HepG2 (cell line): ENCODE measurements at regions of chr5 and their contacts with region 1.

Region 1: GRCh38 chr5:134070725-134071613 is 43.5 kb upstream of the TCF7 start:
- DNase-seq: peak; percentile 72
- ATAC-seq: peak; percentile 88
- H3K4me3 ChIP-seq: peak overlapping the region; percentile 63 to 75 (median 68)
- H3K27ac ChIP-seq: peak overlapping the region; percentile 58
- H3K4me1 ChIP-seq: peaks cover 47% of the 10 kb centered on the region
- H3K27me3 ChIP-seq: no peaks in the 10 kb centered on the region
- CTCF ChIP-seq: peak; percentile 81
- EP300 ChIP-seq: peak in 1 of 2 experiments; percentile 84; a peak in 2 of 4 replicates
- POLR2A ChIP-seq: peak; percentile 13 to 24; a peak in 1 of 4 replicates
- RAD21 ChIP-seq: no peak; the same call in 1 of the 2 replicates

Region 2: GRCh38 chr5:134086943-134087305 is 16.0 kb after region 1 on chr5:
- CTCF ChIA-PET with region 1: no interaction called
- POLR2A ChIA-PET with region 1: interaction called, 11 read pairs
- in situ Hi-C with region 1: no loop called
- intact Hi-C with region 1: no loop called
- DNase-seq: no peak
- ATAC-seq: no peak
- H3K4me3 ChIP-seq: no peak overlapping the region
- H3K27ac ChIP-seq: no peak overlapping the region
- H3K4me1 ChIP-seq: peaks cover 75% of the 10 kb centered on the region
- H3K27me3 ChIP-seq: no peaks in the 10 kb centered on the region
- CTCF ChIP-seq: no peak
- EP300 ChIP-seq: no peak
- POLR2A ChIP-seq: no peak
- RAD21 ChIP-seq: no peak

Region 3: DNA sequence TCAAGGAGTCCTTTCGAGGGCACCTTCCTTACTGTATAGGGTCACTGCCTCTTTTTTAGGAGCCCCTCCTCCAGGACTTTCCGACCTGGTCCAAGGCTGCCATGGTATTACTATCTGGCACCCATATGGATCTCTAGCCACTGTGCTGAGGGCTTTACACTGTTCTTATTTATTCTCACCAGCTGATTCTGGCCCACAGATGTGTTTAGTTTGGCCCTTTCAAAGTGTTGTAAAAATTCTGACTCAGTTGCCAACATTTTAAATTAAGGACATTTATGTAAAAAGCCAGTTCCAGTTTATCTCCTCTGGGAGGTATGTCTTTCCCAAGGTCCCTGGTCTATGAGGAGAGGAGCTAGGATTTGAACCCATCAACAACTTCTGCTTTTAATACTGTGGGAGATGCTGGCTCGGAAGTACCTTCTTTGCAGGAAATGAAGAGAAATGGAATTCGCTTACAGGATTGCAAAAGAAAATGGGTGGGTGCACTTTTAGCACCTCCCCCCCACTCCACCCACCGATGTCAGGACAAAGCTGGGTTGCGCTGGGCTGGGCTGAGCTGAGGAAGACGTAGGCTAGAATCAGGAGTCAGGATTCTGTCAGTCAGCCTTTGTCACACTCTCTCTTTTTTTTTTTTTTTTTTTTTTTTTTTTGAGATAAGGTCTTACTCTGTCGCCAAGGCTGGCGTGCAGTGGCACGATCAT is 462.3 kb after region 1 on chr5:
- CTCF ChIA-PET with region 1: no interaction called
- POLR2A ChIA-PET with region 1: no interaction called
- in situ Hi-C with region 1: no loop called
- intact Hi-C with region 1: no loop called
- DNase-seq: no peak
- ATAC-seq: no peak
- H3K4me3 ChIP-seq: no peak overlapping the region
- H3K27ac ChIP-seq: no peak overlapping the region
- H3K4me1 ChIP-seq: peaks cover 28% of the 10 kb centered on the region
- H3K27me3 ChIP-seq: no peaks in the 10 kb centered on the region
- CTCF ChIP-seq: no peak
- EP300 ChIP-seq: no peak
- POLR2A ChIP-seq: no peak
- RAD21 ChIP-seq: no peak